Panc1 (cell line): ENCODE measurements at regions of chr18 and their contacts with region 1.

Region 1: GRCh38 chr18:23307567-23308295 is 145.4 kb upstream of the RIOK3 start:
- DNase-seq: no peak
- ATAC-seq: no peak
- H3K4me3 ChIP-seq: no peak overlapping the region
- H3K27ac ChIP-seq: no peak overlapping the region
- H3K4me1 ChIP-seq: no peaks in the 10 kb centered on the region
- H3K27me3 ChIP-seq: no peaks in the 10 kb centered on the region
- CTCF ChIP-seq: no peak

Region 2: DNA sequence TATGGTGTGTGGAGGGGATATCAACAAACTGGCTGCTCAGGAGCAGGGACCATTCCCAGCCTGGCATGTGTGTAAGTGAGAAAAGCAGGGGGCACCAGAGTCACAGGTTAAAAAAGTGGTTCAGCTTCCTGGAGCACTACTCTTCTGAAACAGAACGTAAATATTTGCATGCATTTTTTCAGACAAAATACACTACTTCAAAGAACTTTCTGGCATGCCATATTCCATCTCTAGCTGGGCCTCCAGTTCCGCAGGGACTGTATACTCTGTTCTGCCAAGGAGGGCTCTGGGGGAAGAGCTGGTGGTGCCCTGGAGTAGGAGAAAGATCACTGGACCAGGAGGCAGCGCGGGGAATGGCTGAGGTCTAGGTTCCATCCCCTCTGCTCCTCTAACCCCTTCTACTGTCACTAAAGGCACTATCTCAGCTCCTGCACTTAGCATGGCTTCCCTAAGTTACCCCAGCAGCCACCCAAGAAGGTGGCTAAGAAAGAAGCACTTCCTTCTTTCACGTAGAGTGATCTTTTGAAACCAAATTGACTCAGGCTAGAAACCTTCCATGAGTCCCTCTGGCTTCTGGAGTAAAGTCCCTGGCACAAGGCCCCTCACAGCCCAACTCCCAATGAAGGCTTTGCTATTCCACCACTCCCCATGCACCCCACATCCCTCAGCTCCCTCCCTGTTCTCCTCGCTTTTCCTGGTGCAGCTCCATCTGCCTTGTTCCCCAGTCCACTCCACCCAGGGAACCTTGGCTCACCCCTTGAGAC is 230.1 kb before region 1 on chr18:
- CTCF ChIA-PET with region 1: no interaction called
- POLR2A ChIA-PET with region 1: interaction called, 13 read pairs
- in situ Hi-C with region 1: no loop called
- intact Hi-C with region 1: no loop called
- DNase-seq: no peak
- ATAC-seq: peak; percentile 89
- H3K4me3 ChIP-seq: no peak overlapping the region
- H3K27ac ChIP-seq: peak overlapping the region; percentile 60; the same call in 1 of the 2 replicates
- H3K4me1 ChIP-seq: peaks cover 19% of the 10 kb centered on the region
- H3K27me3 ChIP-seq: no peaks in the 10 kb centered on the region
- CTCF ChIP-seq: no peak

Region 3: DNA sequence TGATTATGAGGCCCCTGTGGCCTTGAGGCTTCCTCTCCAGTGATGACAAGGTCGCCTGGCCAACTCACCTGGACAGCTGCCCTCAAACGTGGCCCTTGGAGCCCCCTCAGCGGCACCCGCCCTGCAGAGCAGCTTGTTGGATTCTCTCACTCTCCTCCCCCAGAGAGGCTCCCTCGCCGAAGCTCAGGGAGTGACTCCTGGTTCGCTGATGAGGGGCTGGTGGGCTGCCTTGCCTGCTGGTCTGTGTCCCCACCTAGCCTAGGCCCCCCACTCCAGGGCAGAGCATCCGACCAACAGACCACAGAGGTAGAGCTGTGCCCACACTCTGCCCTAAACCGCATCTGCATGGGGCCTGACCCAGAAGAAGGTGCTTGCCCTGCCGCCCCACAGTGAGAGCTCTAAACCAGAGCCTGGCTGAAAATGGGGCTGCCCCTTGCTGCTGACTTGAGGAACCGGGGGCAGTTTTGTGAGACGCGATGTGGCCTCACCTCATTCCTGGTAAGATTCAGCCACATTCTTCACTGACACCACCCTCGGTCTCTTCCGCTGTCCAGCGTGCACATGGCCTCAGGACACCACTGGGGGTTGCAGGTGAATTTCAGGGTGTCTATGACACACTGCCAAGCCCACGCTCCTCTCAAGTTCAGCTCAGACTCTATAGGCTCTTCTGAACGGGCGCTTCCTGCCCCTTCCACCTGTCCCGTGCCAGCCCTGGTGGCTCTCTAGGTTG is 40.8 kb before region 1 on chr18:
- CTCF ChIA-PET with region 1: no interaction called
- POLR2A ChIA-PET with region 1: no interaction called
- in situ Hi-C with region 1: no loop called
- intact Hi-C with region 1: no loop called
- DNase-seq: no peak
- ATAC-seq: 0 out of 2 replicates have a peak, but pooled peaks have one; percentile 24
- H3K4me3 ChIP-seq: no peak overlapping the region
- H3K27ac ChIP-seq: peak overlapping the region; percentile 62; the same call in 1 of the 2 replicates
- H3K4me1 ChIP-seq: peaks cover 11% of the 10 kb centered on the region; the same call in 1 of the 2 replicates
- H3K27me3 ChIP-seq: no peaks in the 10 kb centered on the region
- CTCF ChIP-seq: no peak